K562 (cell line): ENCODE measurements at regions of chr11 and their contacts with region 1.

Region 1: DNA sequence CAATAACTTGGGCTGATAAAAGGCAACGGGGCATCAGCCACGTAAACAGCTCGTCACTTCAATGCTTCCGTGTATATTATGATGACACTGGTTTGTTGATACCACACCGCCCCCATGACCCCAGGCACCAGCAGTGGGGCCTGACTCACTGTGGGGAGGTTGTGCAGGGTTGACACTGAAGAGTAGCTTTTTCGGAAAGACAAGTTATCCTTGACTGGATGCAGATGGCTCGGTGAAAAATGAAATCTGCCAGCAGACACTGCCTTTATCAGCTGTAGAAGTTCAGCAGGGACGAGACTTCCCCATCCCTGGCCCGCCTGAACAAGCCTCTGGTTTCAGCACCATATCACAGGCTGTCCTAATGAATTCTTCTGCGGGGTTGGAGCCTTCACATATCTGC is 55.6 kb downstream of the WT1 start:
- DNase-seq: peak in 2 of 4 experiments; percentile 53 to 59
- ATAC-seq: peak; percentile 62
- H3K4me3 ChIP-seq: no peak overlapping the region
- H3K27ac ChIP-seq: no peak overlapping the region; the same call in 2 of the 3 replicates
- H3K4me1 ChIP-seq: peaks cover 4 to 14% of the 10 kb centered on the region in 2 experiments
- H3K27me3 ChIP-seq: no peaks in the 10 kb centered on the region
- CTCF ChIP-seq: no peak
- EP300 ChIP-seq: no peak
- POLR2A ChIP-seq: no peak
- RAD21 ChIP-seq: no peak

Region 2: GRCh38 chr11:32333320-32333991 is 46.3 kb before region 1 on chr11:
- CTCF ChIA-PET with region 1: no interaction called
- POLR2A ChIA-PET with region 1: no interaction called
- in situ Hi-C with region 1: no loop called
- intact Hi-C with region 1: loop called (anchors 5 kb)
- DNase-seq: no peak
- ATAC-seq: peak; percentile 36; the same call in 2 of the 3 replicates
- H3K4me3 ChIP-seq: no peak overlapping the region
- H3K27ac ChIP-seq: no peak overlapping the region
- H3K4me1 ChIP-seq: peaks cover 0 to 11% of the 10 kb centered on the region in 2 experiments; a peak in 1 of 5 replicates
- H3K27me3 ChIP-seq: peaks cover 0 to 6% of the 10 kb centered on the region in 2 experiments; a peak in 1 of 5 replicates
- CTCF ChIP-seq: peak in 2 of 3 experiments; percentile 8 to 12; a peak in 1 of 6 replicates
- EP300 ChIP-seq: no peak
- POLR2A ChIP-seq: no peak
- RAD21 ChIP-seq: no peak

Region 3: DNA sequence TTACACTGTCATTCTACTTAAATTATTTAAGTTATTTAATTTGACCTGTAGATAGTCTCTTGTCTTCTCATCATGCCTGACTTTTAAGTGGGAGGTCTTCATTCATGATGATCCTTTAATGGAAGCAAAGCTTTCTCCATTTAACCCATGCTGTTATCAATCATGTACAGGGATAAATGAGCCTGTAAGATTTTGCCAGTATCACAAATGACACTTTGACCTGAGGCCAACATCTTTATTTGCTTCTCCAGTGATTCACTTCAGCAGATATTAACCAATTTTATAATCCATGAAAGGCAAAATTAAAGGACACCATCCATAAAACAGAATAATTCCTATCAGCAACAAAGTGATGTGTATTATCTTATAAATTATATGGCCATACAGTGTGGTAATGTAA is 407.1 kb after region 1 on chr11:
- CTCF ChIA-PET with region 1: no interaction called
- POLR2A ChIA-PET with region 1: no interaction called
- in situ Hi-C with region 1: loop called (anchors 5 kb)
- intact Hi-C with region 1: loop called (anchors 2 kb)
- DNase-seq: no peak
- ATAC-seq: no peak
- H3K4me3 ChIP-seq: no peak overlapping the region
- H3K27ac ChIP-seq: no peak overlapping the region
- H3K4me1 ChIP-seq: no peaks in the 10 kb centered on the region
- H3K27me3 ChIP-seq: peaks cover 0 to 4% of the 10 kb centered on the region in 2 experiments; a peak in 1 of 5 replicates
- CTCF ChIP-seq: no peak
- EP300 ChIP-seq: no peak
- POLR2A ChIP-seq: no peak
- RAD21 ChIP-seq: no peak

Region 4: GRCh38 chr11:33222052-33222750 is 842.5 kb after region 1 on chr11:
- CTCF ChIA-PET with region 1: no interaction called
- POLR2A ChIA-PET with region 1: no interaction called
- in situ Hi-C with region 1: no loop called
- intact Hi-C with region 1: no loop called
- DNase-seq: no peak
- ATAC-seq: no peak
- H3K4me3 ChIP-seq: no peak overlapping the region
- H3K27ac ChIP-seq: no peak overlapping the region
- H3K4me1 ChIP-seq: no peaks in the 10 kb centered on the region
- H3K27me3 ChIP-seq: no peaks in the 10 kb centered on the region
- CTCF ChIP-seq: no peak
- EP300 ChIP-seq: no peak
- POLR2A ChIP-seq: no peak
- RAD21 ChIP-seq: no peak